ENCODE measurements at regions of chr13 and their contacts with region 1.

Region 1: GRCh38 chr13:43433691-43434141 is 353.1 kb downstream of the ENOX1 start:
- DNase-seq: no peak
- CTCF ChIP-seq: no peak

Region 2: GRCh38 chr13:43444081-43444480 is 10.4 kb after region 1 on chr13:
- CTCF ChIA-PET with region 1: interaction called, 11 read pairs
- POLR2A ChIA-PET with region 1: no interaction called
- DNase-seq: no peak
- CTCF ChIP-seq: no peak